ENCODE measurements at regions of chr1 and their contacts with region 1.

Region 1: DNA sequence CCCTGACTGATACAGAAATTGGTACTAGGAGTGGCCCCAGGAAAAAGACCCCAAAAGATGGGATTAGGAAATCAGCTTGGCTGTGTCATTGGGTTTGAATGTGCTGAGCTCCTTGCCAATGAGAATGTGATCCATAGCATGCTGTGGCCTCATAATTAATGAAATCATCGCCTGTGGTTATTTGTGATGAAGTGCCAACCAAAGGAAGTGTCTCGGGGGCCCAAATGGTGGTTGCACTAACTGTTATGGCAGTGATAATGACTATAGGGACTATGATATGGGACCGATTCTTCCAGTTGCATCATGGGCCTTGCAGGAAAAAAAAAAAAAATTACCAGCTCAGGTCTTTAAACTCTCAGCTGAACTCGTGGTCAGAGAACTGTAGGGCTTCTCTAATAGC is 15.4 kb upstream of the ZDHHC18 start:
- DNase-seq: peak; percentile 37
- ATAC-seq: no peak
- H3K4me3 Mint-ChIP-seq: no peak overlapping the region
- H3K27ac Mint-ChIP-seq: peak overlapping the region; percentile 55
- H3K4me1 Mint-ChIP-seq: peaks cover 22% of the 10 kb centered on the region
- H3K27me3 Mint-ChIP-seq: no peaks in the 10 kb centered on the region
- CTCF ChIP-seq: no peak

Region 2: GRCh38 chr1:26799479-26800142 is 11.4 kb before region 1 on chr1:
- CTCF ChIA-PET with region 1: interaction called, 82 read pairs
- POLR2A ChIA-PET with region 1: interaction called, 4 read pairs
- intact Hi-C with region 1: no loop called
- DNase-seq: peak; percentile 62
- ATAC-seq: peak; percentile 80
- H3K4me3 Mint-ChIP-seq: peak overlapping the region; percentile 64
- H3K27ac Mint-ChIP-seq: peak overlapping the region; percentile 96
- H3K4me1 Mint-ChIP-seq: peaks cover 47% of the 10 kb centered on the region
- H3K27me3 Mint-ChIP-seq: no peaks in the 10 kb centered on the region
- CTCF ChIP-seq: no peak

Region 3: DNA sequence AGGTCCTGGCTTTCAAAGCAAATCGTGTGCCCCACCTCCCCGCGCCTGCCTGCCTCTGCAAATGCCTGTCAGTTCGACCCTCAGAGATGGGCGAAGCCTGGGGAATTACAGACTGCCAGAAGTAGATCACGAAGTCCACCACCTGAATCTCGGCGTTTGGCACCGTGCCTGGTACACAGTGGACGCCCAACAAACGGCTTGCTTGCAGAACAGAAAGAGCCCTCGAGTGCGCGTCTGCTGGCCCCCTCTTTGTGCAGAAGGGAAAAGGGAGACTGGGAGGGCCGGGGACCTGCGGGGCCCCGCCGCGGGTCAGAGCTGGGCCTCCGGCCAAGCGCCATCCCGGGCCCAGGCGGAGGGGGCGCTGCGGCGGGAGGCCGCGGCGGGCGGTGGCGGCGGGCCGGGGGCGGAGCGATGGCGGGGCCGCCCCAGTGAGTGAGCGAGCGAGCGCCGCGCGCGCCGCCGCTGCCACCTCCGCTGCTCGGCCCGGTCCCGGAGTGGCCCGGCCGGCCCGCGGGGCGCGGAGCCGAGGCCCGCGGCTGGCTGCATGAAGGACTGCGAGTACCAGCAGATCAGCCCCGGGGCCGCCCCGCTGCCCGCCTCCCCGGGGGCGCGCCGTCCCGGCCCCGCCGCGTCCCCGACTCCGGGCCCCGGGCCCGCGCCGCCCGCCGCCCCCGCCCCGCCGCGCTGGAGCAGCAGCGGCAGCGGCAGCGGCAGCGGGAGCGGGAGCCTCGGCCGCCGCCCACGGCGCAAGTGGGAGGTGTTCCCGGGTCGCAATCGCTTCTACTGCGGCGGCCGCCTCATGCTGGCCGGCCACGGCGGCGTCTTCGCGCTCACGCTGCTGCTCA is 15.4 kb after region 1 on chr1 and contains the start of gene ZDHHC18:
- CTCF ChIA-PET with region 1: interaction called, 59 read pairs
- POLR2A ChIA-PET with region 1: interaction called, 11 read pairs
- intact Hi-C with region 1: no loop called
- DNase-seq: peak; percentile 69
- ATAC-seq: peak; percentile 84
- H3K4me3 Mint-ChIP-seq: peak within 1 kb of the TSS; percentile 100
- H3K27ac Mint-ChIP-seq: peak within 1 kb of the TSS; percentile 96
- H3K4me1 Mint-ChIP-seq: peaks cover 45% of the 10 kb centered on the region
- H3K27me3 Mint-ChIP-seq: no peaks in the 10 kb centered on the region
- CTCF ChIP-seq: no peak
- total RNA-seq, gene ZDHHC18: 55.0 to 61.3 TPM

Region 4: DNA sequence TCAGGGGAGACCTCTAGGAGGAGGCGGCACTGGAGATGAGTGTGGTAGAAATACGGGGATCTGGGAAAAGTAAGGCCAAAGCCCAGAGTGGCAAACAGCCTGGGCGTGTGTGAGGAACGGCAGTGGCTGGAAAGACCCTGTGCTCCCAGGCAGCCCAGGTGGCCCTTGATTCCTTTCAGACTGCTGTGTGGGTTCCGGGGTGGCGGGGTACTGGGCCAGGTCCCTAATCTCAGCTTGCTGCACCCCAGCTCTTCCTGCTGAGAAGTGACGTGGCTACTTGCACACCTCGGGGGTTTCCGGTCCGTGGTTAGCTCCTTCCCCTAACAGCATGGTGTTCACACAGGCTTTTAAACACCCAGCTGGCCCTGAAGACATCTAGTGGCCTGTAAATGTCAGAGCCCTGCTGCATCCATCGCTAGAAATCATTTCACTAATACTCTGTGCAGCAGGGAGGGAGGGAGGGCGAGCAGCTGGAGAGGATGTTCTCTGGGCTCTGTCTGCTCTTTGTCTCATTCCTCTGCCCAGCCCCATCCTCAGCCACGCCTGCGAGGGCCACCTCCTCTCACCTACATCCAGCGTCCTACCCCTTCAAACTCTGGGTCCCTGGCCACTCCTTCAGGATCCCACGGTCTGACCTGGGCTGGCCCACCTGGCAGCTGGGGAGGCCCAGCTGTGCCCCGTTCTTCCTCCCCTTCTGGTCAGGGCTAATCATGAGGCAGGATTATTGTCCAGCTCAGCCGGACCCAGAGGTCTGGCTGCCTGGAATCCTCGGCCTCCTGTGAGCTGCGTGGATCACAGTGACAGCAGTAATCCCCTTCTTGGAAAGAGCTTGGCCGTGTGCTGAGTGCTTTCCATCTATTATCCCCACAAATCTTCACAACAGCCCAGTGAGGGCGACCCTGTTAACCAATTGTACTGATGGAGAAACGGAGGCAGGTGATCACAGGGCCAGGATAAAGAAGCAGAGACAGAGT is 22.7 kb after region 1 on chr1:
- CTCF ChIA-PET with region 1: interaction called, 36 read pairs
- POLR2A ChIA-PET with region 1: interaction called, 8 read pairs
- intact Hi-C with region 1: no loop called
- DNase-seq: peak; percentile 95
- ATAC-seq: peak; percentile 94
- H3K4me3 Mint-ChIP-seq: peak overlapping the region; percentile 62
- H3K27ac Mint-ChIP-seq: peak overlapping the region; percentile 98
- H3K4me1 Mint-ChIP-seq: peaks cover 67% of the 10 kb centered on the region
- H3K27me3 Mint-ChIP-seq: no peaks in the 10 kb centered on the region
- CTCF ChIP-seq: no peak

Region 5: GRCh38 chr1:26874896-26875295 is 63.8 kb after region 1 on chr1:
- CTCF ChIA-PET with region 1: interaction called, 6 read pairs
- POLR2A ChIA-PET with region 1: interaction called, 4 read pairs
- intact Hi-C with region 1: loop called (anchors 10 kb)
- DNase-seq: no peak
- ATAC-seq: no peak
- H3K4me3 Mint-ChIP-seq: no peak overlapping the region
- H3K27ac Mint-ChIP-seq: no peak overlapping the region
- H3K4me1 Mint-ChIP-seq: peaks cover 2% of the 10 kb centered on the region
- H3K27me3 Mint-ChIP-seq: no peaks in the 10 kb centered on the region
- CTCF ChIP-seq: no peak

Measured in activated CD8-positive, alpha-beta T cell treated with anti-CD3 and anti-CD28 coated beads for 36 hours (primary cell).